ENCODE measurements at regions of chr15 and their contacts with region 1.

Region 1: GRCh38 chr15:57146506-57147201 is 228.2 kb downstream of the TCF12 start:
- DNase-seq: no peak
- H3K4me3 ChIP-seq: peak overlapping the region; percentile 27 to 36 (median 36)
- H3K27ac ChIP-seq: peak overlapping the region; percentile 27 to 62 (median 50)
- H3K4me1 ChIP-seq: peaks cover 39 to 59% (median 54%) of the 10 kb centered on the region in 4 donors
- H3K27me3 ChIP-seq: no peaks in the 10 kb centered on the region
- CTCF ChIP-seq: peak; percentile 73 to 80 (median 76)
- EP300 ChIP-seq: no peak
- POLR2A ChIP-seq: no peak

Region 2: DNA sequence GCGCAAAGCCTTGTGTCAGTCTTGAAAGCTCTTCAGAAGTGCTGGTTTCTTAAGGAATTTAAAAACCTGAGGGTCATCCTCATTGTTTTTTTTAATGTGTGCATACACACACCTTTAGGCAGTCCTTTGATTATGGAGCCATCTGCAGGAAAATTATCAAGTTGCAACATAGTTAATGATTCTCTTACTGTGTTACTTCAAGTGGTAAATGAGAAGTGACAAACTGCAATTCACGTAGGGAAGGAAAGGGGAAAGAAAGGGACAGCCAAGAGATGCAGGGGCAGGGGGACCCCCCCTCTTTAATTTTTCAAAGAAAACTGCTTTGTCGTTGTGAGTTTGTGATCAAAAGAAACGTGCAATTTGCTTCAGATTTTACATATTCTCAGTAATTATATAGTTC is 67.2 kb after region 1 on chr15:
- intact Hi-C with region 1: loop called (anchors 2 kb)
- DNase-seq: no peak
- H3K4me3 ChIP-seq: no peak overlapping the region
- H3K27ac ChIP-seq: no peak overlapping the region
- H3K4me1 ChIP-seq: peaks cover 9 to 64% (median 56%) of the 10 kb centered on the region in 4 donors
- H3K27me3 ChIP-seq: no peaks in the 10 kb centered on the region
- CTCF ChIP-seq: peak; percentile 53 to 63 (median 57)
- EP300 ChIP-seq: no peak
- POLR2A ChIP-seq: no peak

Region 3: DNA sequence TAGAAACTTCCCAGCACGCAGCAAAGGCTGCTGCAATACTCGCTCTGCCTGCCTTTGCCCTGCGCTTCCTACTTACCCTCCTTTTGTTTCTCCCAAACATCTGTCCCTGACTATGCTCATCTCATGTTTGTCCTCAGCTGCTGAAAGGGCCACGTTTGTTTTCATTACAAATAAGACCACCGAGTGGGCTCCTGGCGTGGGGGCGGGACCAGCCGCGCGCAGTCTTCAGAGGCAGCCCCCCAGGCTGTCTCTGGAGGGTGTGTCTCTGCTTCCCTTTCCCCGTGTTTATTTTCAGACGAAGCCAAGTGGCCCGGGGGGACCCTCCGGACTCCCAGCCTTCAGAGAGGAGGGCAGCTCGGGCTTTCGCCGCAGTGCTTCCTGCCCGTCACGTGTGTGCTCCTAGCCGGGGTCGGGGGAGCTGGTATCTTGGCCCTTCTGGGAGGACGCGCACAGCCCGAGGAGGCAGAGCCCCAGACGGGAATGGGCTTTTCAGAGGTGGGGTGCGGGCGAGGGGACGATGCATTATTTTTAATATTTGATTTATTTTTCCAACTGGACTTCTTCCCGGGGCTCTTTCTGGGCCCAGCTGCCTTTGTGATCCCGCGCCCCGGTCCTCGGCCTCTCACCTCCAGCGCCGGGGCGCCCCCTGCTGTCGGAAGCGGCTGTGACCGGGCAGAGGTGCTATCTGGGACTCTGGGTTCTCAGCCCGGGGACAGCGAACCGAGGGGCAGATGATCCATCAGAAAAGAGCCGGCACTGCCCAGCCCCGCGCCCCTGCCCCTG is 159.7 kb after region 1 on chr15:
- intact Hi-C with region 1: loop called (anchors 2 kb)
- DNase-seq: peak; percentile 97
- H3K4me3 ChIP-seq: peak overlapping the region; percentile 52 to 69 (median 64)
- H3K27ac ChIP-seq: peak overlapping the region in 2 of 4 donors; percentile 2 to 43
- H3K4me1 ChIP-seq: peaks cover 6 to 21% (median 16%) of the 10 kb centered on the region in 4 donors
- H3K27me3 ChIP-seq: no peaks in the 10 kb centered on the region
- CTCF ChIP-seq: peak; percentile 76 to 90 (median 85)
- EP300 ChIP-seq: no peak
- POLR2A ChIP-seq: no peak

Measured in esophagus muscularis mucosa (tissue), 4 donors.